Vagina (tissue), 2 donors: ENCODE measurements at regions of chr9 and their contacts with region 1.

Region 1: DNA sequence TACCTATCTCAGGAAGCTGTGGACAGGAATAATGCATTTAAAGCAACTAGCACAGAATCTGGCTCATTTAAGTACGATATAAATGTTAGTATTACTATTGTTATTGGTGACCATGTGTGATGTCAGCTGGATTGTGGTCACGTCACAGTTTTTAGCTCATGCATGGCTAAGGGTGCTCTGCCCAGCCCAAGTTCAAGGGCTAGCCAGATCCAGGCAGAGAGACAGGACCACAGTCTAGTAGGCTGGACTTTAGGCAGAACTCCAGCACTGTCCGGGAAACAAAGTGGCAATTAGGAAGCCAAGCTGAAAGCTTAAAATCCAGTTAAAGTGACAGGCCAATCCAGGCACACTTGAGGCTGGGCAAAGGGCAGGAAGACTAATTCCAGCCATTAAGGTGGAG is 273.6 kb downstream of the ADAMTSL1 start:
- DNase-seq: no peak
- H3K4me3 ChIP-seq: no peak overlapping the region
- H3K27ac ChIP-seq: no peak overlapping the region
- H3K4me1 ChIP-seq: no peaks in the 10 kb centered on the region
- H3K27me3 ChIP-seq: no peaks in the 10 kb centered on the region
- CTCF ChIP-seq: no peak
- POLR2A ChIP-seq: no peak

Region 2: GRCh38 chr9:18678821-18679590 is 68.6 kb before region 1 on chr9:
- intact Hi-C with region 1: no loop called
- DNase-seq: no peak
- H3K4me3 ChIP-seq: no peak overlapping the region
- H3K27ac ChIP-seq: no peak overlapping the region
- H3K4me1 ChIP-seq: peaks cover 11% of the 10 kb centered on the region
- H3K27me3 ChIP-seq: no peaks in the 10 kb centered on the region
- CTCF ChIP-seq: no peak
- POLR2A ChIP-seq: no peak

Region 3: GRCh38 chr9:18721267-18721994 is 26.2 kb before region 1 on chr9:
- intact Hi-C with region 1: no loop called
- DNase-seq: no peak
- H3K4me3 ChIP-seq: no peak overlapping the region
- H3K27ac ChIP-seq: no peak overlapping the region
- H3K4me1 ChIP-seq: no peaks in the 10 kb centered on the region
- H3K27me3 ChIP-seq: no peaks in the 10 kb centered on the region
- CTCF ChIP-seq: no peak
- POLR2A ChIP-seq: no peak

Region 4: DNA sequence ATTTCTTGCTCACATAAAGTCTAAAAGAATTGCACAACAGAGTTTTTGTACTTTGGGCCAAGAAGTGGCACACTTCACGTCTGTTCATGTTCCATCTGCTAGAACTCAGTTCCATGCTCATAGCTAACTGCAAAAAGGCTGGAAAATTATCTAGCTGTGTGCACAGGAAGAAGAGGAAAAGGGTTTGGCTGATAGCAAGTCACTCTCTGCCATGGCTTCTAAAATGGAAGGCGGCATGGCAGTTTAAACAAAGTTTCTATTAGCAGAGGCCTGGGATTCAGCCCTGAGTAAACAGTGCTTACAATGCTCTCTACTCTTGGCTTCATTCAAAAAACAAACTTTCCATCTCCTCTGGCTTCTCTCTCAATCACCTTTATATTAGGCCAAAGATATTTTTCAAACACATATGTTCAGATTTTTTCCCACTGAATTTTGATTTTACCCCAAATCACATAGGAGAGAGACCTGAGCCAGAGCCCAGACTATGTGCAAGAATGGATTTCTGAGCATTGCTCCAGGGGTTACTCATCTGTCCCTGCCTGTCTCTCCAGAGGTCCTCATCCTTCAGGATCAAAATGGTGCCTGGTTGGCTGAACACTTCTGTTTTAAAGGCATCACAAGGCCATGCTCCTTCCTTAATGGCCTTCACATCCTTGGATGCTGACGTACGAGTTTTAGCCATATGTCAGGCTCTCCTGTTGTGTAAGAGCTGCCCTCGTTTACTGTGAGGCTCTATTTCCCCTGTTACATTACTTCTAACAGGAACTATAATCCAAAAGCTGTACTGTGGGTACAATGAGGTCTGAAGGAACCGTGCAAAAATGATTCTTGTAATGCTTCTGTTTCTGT is 58.9 kb after region 1 on chr9:
- intact Hi-C with region 1: loop called (anchors 10 kb)
- DNase-seq: no peak
- H3K4me3 ChIP-seq: no peak overlapping the region
- H3K27ac ChIP-seq: no peak overlapping the region
- H3K4me1 ChIP-seq: no peaks in the 10 kb centered on the region
- H3K27me3 ChIP-seq: no peaks in the 10 kb centered on the region
- CTCF ChIP-seq: no peak
- POLR2A ChIP-seq: no peak

Region 5: GRCh38 chr9:19999491-20000057 is 1252.0 kb after region 1 on chr9:
- intact Hi-C with region 1: no loop called
- DNase-seq: no peak
- H3K4me3 ChIP-seq: no peak overlapping the region
- H3K27ac ChIP-seq: no peak overlapping the region
- H3K4me1 ChIP-seq: no peaks in the 10 kb centered on the region
- H3K27me3 ChIP-seq: no peaks in the 10 kb centered on the region
- CTCF ChIP-seq: no peak
- POLR2A ChIP-seq: no peak